ENCODE measurements at regions of chr22 and their contacts with region 1.

Region 1: GRCh38 chr22:30386960-30387827 is at the start of gene RNF215:
- DNase-seq: peak; percentile 80 to 93 (median 87)
- H3K4me3 ChIP-seq: peak within 1 kb of the TSS; percentile 50
- H3K27ac ChIP-seq: peak within 1 kb of the TSS; percentile 35 to 61
- H3K4me1 ChIP-seq: peaks cover 4% of the 10 kb centered on the region
- H3K27me3 ChIP-seq: no peaks in the 10 kb centered on the region
- CTCF ChIP-seq: peak; percentile 87 to 97 (median 93)
- EP300 ChIP-seq: no peak
- POLR2A ChIP-seq: no peak
- total RNA-seq, gene RNF215: 6.1 to 26.1 (median 15.4) TPM

Region 2: GRCh38 chr22:30104501-30105156 is 282.6 kb before region 1 on chr22:
- intact Hi-C with region 1: loop called in 3 of 4 experiments (anchors 10 kb)
- DNase-seq: no peak
- H3K4me3 ChIP-seq: no peak overlapping the region
- H3K27ac ChIP-seq: no peak overlapping the region
- H3K4me1 ChIP-seq: no peaks in the 10 kb centered on the region
- H3K27me3 ChIP-seq: no peaks in the 10 kb centered on the region
- CTCF ChIP-seq: no peak
- EP300 ChIP-seq: no peak
- POLR2A ChIP-seq: no peak

Region 3: DNA sequence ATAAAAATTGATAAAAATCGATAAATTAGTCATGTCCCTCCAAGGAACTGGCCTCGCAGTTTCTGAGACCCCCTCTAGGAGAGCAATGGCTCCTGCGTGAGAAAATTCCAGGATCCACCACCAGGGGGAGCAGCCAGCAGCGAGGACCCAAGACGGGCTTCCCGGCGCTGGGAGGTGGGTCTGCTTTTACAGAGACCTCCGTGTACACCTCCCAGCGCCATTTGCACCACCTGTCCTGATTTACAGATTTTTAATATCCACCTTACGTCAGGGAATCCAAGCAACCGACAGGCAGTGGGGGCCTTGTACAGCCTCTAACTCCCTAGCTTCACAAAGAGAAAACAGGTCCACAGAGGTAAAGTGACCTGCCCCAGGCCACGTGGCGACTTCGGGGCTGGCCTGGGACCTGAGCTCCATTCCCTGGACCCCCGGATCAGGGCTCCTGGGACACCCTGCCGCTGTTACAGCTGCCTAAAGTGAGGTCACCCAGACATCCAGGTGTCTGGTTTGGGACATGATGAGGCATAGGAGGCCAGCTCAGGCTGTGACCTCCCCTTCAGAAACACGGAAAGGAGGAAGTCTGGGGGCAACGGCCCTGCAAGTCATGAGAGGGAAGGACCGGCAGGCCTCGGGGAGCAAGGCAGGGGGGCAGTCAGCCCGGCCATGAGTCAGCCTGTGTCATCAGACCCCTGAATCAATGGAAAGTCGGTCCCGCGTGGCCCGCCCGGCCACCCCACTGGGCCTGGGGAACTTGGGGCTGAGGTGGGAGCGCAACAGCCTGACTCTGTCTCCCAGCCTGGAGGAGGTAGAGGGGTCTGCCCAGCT is 124.1 kb before region 1 on chr22:
- intact Hi-C with region 1: loop called in 3 of 4 experiments (anchors 2 to 5 kb)
- DNase-seq: peak; percentile 66 to 84 (median 83)
- H3K4me3 ChIP-seq: no peak overlapping the region
- H3K27ac ChIP-seq: no peak overlapping the region
- H3K4me1 ChIP-seq: no peaks in the 10 kb centered on the region
- H3K27me3 ChIP-seq: no peaks in the 10 kb centered on the region
- CTCF ChIP-seq: peak; percentile 95 to 97 (median 95)
- EP300 ChIP-seq: no peak
- POLR2A ChIP-seq: no peak

Region 4: GRCh38 chr22:30289134-30289979 is 97.8 kb before region 1 on chr22 and contains the start of gene CASTOR1:
- intact Hi-C with region 1: loop called in 3 of 4 experiments (anchors 2 to 5 kb)
- DNase-seq: peak; percentile 98 to 99 (median 99)
- H3K4me3 ChIP-seq: peak within 1 kb of the TSS; percentile 97
- H3K27ac ChIP-seq: peak within 1 kb of the TSS; percentile 83 to 87
- H3K4me1 ChIP-seq: peaks cover 17% of the 10 kb centered on the region
- H3K27me3 ChIP-seq: no peaks in the 10 kb centered on the region
- CTCF ChIP-seq: peak in 1 of 3 donors; percentile 27
- EP300 ChIP-seq: peak; percentile 6
- POLR2A ChIP-seq: peak; percentile 79
- total RNA-seq, gene CASTOR1: 11.0 to 31.2 (median 20.6) TPM

Region 5: GRCh38 chr22:30356449-30357235 is 30.6 kb before region 1 on chr22 and contains the starts of genes CCDC157 and SF3A1:
- intact Hi-C with region 1: loop called in 1 of 4 experiments (anchors 2 kb)
- DNase-seq: peak; percentile 83 to 93 (median 88)
- H3K4me3 ChIP-seq: peak within 1 kb of the TSS; percentile 68
- H3K27ac ChIP-seq: peak within 1 kb of the TSS; percentile 93 to 96
- H3K4me1 ChIP-seq: peaks cover 8% of the 10 kb centered on the region
- H3K27me3 ChIP-seq: no peaks in the 10 kb centered on the region
- CTCF ChIP-seq: peak in 1 of 3 donors; percentile 37
- EP300 ChIP-seq: no peak
- POLR2A ChIP-seq: peak; percentile 97
- total RNA-seq, gene CCDC157: 2.0 to 28.0 (median 2.7) TPM
- total RNA-seq, gene SF3A1: 36.4 to 211 (median 176) TPM

Region 6: DNA sequence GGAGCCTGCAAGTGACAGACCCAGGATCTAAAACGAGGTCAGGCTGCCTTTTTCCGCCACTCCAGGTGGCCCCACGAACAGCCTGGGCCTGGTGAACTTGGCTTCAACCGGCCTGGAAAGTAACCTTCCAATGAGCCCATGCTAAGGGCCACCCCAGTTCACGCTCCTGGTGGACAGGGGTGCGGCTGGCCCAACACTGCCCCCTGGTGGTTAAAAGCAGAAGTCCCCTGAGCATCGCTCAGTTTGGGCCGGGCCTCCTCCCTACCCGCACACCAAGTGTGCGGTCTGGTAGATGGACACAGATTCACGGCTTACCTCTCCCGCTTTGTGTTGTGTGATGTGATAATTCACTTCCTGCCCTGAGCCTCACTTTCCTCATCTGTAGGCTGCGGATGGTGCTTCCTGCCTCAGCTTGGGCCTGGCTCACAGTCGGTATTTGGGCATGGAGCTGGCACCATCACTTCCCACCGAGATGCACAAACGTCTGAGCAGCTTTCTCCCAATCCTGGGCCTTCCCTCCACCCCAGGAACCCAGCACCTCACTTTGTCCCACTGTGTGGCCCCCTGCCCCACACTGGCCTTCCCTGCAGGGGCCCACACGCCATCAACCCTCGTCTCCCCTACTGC is 98.3 kb after region 1 on chr22:
- intact Hi-C with region 1: loop called in 3 of 4 experiments (anchors 5 kb)
- DNase-seq: peak; percentile 63 to 83 (median 74)
- H3K4me3 ChIP-seq: no peak overlapping the region
- H3K27ac ChIP-seq: no peak overlapping the region
- H3K4me1 ChIP-seq: no peaks in the 10 kb centered on the region
- H3K27me3 ChIP-seq: no peaks in the 10 kb centered on the region
- CTCF ChIP-seq: peak; percentile 90 to 93 (median 93)
- EP300 ChIP-seq: no peak
- POLR2A ChIP-seq: no peak

Measured in ovary (tissue), 10 donors.